ENCODE measurements at regions of chr5 and their contacts with region 1.

Region 1: GRCh38 chr5:90940227-90940995 is 381.8 kb downstream of the ADGRV1 start:
- DNase-seq: peak; percentile 73
- ATAC-seq: peak; percentile 100
- H3K4me3 ChIP-seq: no peak overlapping the region
- H3K27ac ChIP-seq: no peak overlapping the region
- H3K4me1 ChIP-seq: no peaks in the 10 kb centered on the region
- H3K27me3 ChIP-seq: no peaks in the 10 kb centered on the region
- CTCF ChIP-seq: no peak
- EP300 ChIP-seq: no peak
- POLR2A ChIP-seq: no peak
- RAD21 ChIP-seq: no peak

Region 2: DNA sequence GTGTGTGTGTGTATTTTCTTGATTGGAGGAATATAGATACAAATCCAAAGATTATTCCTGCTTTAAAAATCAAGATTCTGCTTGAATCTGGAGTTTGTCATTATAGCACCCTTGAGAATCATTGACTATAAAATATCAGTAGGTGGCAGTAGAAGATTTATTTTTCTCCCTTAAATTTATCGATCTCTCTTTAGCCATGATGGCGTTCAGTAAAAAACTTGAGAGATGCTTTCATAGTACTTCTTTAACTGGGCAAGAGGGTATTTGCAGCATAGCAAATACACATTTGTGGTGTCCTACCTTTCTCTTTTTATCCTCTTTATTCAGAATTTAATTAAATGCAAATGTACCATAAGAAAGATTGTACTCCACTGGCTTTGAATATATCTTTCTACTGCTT is 74.1 kb before region 1 on chr5:
- CTCF ChIA-PET with region 1: no interaction called
- POLR2A ChIA-PET with region 1: no interaction called
- RAD21 ChIA-PET with region 1: no interaction called
- SMC1A ChIA-PET with region 1: no interaction called
- in situ Hi-C with region 1: no loop called
- intact Hi-C with region 1: no loop called
- DNase-seq: no peak
- ATAC-seq: peak; percentile 67
- H3K4me3 ChIP-seq: no peak overlapping the region
- H3K27ac ChIP-seq: no peak overlapping the region
- H3K4me1 ChIP-seq: no peaks in the 10 kb centered on the region
- H3K27me3 ChIP-seq: no peaks in the 10 kb centered on the region
- CTCF ChIP-seq: peak in 2 of 3 experiments; percentile 23 to 44; a peak in 3 of 6 replicates
- EP300 ChIP-seq: no peak
- POLR2A ChIP-seq: no peak
- RAD21 ChIP-seq: peak; percentile 55; the same call in 1 of the 2 replicates

Region 3: GRCh38 chr5:91074615-91075014 is 134.2 kb after region 1 on chr5:
- CTCF ChIA-PET with region 1: no interaction called
- POLR2A ChIA-PET with region 1: no interaction called
- RAD21 ChIA-PET with region 1: no interaction called
- SMC1A ChIA-PET with region 1: no interaction called
- in situ Hi-C with region 1: no loop called
- intact Hi-C with region 1: loop called (anchors 5 kb)
- DNase-seq: peak; percentile 23
- ATAC-seq: peak; percentile 78
- H3K4me3 ChIP-seq: no peak overlapping the region
- H3K27ac ChIP-seq: no peak overlapping the region
- H3K4me1 ChIP-seq: peaks cover 5% of the 10 kb centered on the region
- H3K27me3 ChIP-seq: no peaks in the 10 kb centered on the region
- CTCF ChIP-seq: no peak
- EP300 ChIP-seq: no peak
- POLR2A ChIP-seq: no peak
- RAD21 ChIP-seq: no peak